ENCODE measurements at regions of chr12 and their contacts with region 1.

Region 1: DNA sequence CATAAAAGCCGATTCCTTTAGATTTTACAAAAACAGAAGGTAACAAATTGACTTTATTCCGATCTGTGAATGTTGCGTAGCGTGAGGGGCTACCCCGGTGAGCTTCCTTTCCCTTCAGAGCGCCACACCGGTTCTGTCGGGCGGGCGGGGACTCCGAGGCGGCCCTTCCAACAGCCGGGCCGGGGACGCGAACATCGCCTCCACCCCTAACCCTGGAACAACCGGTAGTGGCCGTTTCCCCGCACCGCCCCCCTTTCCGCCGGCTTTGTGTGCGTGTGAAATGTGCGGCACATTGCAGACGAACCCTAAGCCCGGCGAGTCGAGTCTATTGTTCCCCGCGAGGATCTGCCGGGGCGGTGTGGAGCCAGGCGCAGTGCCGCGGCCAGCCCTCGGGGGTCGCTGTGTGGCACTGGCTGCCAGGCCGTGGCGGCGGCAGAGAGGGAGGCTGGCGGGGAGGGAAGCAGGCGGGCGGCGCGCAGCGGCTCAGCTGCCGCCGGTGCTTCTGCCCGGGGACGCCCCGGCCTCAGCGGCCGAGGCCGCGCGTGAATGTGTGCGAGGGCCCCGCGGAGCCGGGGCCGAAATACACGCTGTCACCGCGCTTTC is 775 bp upstream of the ARID2 start:
- DNase-seq: peak; percentile 82
- CTCF ChIP-seq: peak; percentile 99

Region 2: DNA sequence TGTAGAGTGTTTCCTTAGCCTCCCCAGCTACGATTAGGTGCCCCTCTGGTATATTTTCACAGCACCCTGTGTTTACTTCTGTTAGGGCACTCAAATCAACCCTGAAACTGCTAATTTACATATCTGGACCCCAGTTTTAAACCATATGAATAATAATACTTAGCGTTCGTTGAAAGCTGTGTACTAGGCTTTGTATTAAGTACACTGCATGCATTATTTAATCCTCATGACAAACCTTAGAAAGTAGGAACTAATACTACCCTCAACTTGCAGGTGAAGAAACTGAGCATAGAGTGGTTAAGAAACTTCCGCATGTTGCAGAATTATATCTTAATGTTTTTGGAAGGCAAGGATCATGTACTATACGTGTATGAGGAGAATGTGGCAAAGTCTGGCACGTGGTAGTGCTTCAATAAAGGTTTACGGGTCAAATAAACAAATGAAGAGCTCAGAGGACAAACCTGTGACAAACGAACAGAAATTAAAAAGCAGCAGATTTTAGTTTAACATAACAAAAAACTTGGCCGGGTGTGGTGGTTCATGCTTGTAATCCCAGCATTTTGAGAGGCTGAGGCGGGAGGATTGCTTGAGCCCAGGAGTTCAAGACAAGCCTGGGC is 21.4 kb before region 1 on chr12:
- CTCF ChIA-PET with region 1: interaction called, 13 read pairs
- POLR2A ChIA-PET with region 1: no interaction called
- DNase-seq: no peak
- CTCF ChIP-seq: no peak

Region 3: DNA sequence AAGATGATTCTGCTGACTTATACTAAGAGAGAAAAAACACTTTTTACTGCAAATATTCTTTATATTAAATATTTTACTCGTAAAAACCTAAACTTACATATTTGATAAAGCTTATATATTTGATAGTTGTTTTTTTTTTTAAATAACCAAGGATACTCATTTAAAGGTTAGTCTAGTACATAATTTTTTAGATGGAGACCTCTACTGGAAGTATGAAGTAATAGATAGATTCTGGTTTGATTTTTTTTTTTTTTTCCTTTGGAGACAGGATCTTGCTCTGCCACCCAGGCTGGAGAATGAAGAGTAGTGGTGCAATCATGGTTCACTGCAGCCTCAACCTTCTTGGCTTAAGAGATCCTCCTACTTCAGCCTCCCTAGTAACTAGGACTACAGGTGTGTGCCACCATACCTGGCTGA is 17.1 kb after region 1 on chr12:
- CTCF ChIA-PET with region 1: interaction called, 26 read pairs
- POLR2A ChIA-PET with region 1: no interaction called
- DNase-seq: no peak
- CTCF ChIP-seq: peak; percentile 9